ENCODE measurements at regions of chr4 and their contacts with region 1.

Region 1: DNA sequence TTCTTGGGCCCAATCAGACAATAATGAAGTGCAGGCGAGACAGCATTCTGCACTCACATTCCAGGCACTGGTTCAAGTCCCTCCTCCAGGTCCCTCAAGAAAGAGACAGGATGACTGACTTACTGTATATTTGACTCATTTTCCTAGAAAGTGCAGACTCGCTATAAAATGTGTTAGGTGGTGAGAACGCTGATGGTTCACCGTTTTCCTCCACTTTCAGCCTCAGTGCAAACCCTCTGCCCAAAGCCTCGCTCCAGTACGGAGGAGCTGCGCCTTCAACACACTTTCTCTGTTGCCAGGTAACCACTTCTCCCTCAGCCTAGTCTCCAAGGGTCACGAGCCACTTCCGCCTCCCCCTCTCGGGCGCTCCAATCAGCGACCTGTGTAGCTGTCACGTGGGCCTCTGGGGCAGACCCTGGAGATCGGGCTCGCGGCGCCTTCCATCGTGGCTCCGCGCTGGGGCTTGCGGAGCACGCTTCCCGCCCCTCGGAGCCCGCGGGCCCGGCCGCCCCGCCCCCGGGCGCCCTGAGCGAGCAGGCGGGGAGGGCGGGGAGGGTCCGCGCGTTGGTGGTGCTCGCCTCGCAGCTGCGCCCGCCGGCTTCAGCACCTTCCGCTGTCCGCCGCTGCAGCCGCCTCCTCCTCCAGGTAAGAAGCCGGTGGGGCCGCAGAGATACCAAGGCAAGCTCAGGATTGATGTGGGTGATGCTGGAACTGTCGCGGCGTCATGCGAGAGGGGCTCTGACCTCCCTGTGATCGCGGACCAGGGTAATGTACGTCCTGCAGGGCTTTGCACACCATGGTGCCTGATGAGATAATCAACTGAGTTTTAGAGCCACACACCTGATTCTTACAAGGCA is at the start of gene WDR17:
- DNase-seq: peak; percentile 73
- H3K4me3 Mint-ChIP-seq: peak within 1 kb of the TSS; percentile 82
- H3K27ac Mint-ChIP-seq: no peak within 1 kb of the TSS
- H3K4me1 Mint-ChIP-seq: peaks cover 11% of the 10 kb centered on the region
- H3K27me3 Mint-ChIP-seq: peaks cover 23% of the 10 kb centered on the region
- total RNA-seq, gene WDR17: 1.0 and 1.4 TPM in 2 replicates

Region 2: GRCh38 chr4:175784986-175785525 is 280.6 kb before region 1 on chr4:
- intact Hi-C with region 1: no loop called
- DNase-seq: no peak
- H3K4me3 Mint-ChIP-seq: no peak overlapping the region
- H3K27ac Mint-ChIP-seq: no peak overlapping the region
- H3K4me1 Mint-ChIP-seq: no peaks in the 10 kb centered on the region
- H3K27me3 Mint-ChIP-seq: no peaks in the 10 kb centered on the region

Region 3: GRCh38 chr4:176319704-176320339 is 254.2 kb after region 1 on chr4 and contains the start of gene SPCS3:
- intact Hi-C with region 1: loop called (anchors 5 kb)
- DNase-seq: peak; percentile 92
- H3K4me3 Mint-ChIP-seq: peak within 1 kb of the TSS; percentile 94
- H3K27ac Mint-ChIP-seq: peak within 1 kb of the TSS; percentile 93
- H3K4me1 Mint-ChIP-seq: peaks cover 30% of the 10 kb centered on the region
- H3K27me3 Mint-ChIP-seq: peaks cover 5% of the 10 kb centered on the region
- total RNA-seq, gene SPCS3: 197 and 208 TPM in 2 replicates

Region 4: GRCh38 chr4:176335406-176335805 is 269.7 kb after region 1 on chr4:
- intact Hi-C with region 1: no loop called
- DNase-seq: no peak
- H3K4me3 Mint-ChIP-seq: no peak overlapping the region
- H3K27ac Mint-ChIP-seq: no peak overlapping the region
- H3K4me1 Mint-ChIP-seq: peaks cover 8% of the 10 kb centered on the region
- H3K27me3 Mint-ChIP-seq: no peaks in the 10 kb centered on the region

Measured in activated T-helper 2 cell treated with anti-CD3 and anti-CD28 coated beads, Interferon-gamma antibody, Interleukin-2, Interleukin-4, amounts not matched to agents 10 μg/mL and 5 μg/mL and 100 μg/mL, durations not matched to agents 14 hours and 24 hours and 36 hours (primary cell).